Ascending aorta (tissue), 2 donors: ENCODE measurements at regions of chr4 and their contacts with region 1.

Region 1: GRCh38 chr4:156771171-156771837 is 200.3 kb downstream of the PDGFC start:
- DNase-seq: peak in 1 of 2 donors; percentile 73
- H3K4me3 ChIP-seq: peak overlapping the region; percentile 24 to 43
- H3K27ac ChIP-seq: peak overlapping the region; percentile 73 to 80
- H3K4me1 ChIP-seq: peaks cover 6 to 50% of the 10 kb centered on the region in 2 donors
- H3K27me3 ChIP-seq: no peaks in the 10 kb centered on the region
- CTCF ChIP-seq: no peak

Region 2: GRCh38 chr4:156073976-156074375 is 697.3 kb before region 1 on chr4:
- intact Hi-C with region 1: no loop called
- DNase-seq: no peak
- H3K4me3 ChIP-seq: no peak overlapping the region
- H3K27ac ChIP-seq: no peak overlapping the region
- H3K4me1 ChIP-seq: no peaks in the 10 kb centered on the region
- H3K27me3 ChIP-seq: no peaks in the 10 kb centered on the region
- CTCF ChIP-seq: no peak

Region 3: GRCh38 chr4:156132196-156132595 is 639.1 kb before region 1 on chr4:
- intact Hi-C with region 1: no loop called
- DNase-seq: no peak
- H3K4me3 ChIP-seq: no peak overlapping the region
- H3K27ac ChIP-seq: no peak overlapping the region
- H3K4me1 ChIP-seq: no peaks in the 10 kb centered on the region
- H3K27me3 ChIP-seq: no peaks in the 10 kb centered on the region
- CTCF ChIP-seq: no peak

Region 4: GRCh38 chr4:156790866-156791265 is 19.6 kb after region 1 on chr4:
- intact Hi-C with region 1: no loop called
- DNase-seq: no peak
- H3K4me3 ChIP-seq: no peak overlapping the region
- H3K27ac ChIP-seq: no peak overlapping the region
- H3K4me1 ChIP-seq: peaks cover 2 to 17% of the 10 kb centered on the region in 2 donors
- H3K27me3 ChIP-seq: no peaks in the 10 kb centered on the region
- CTCF ChIP-seq: no peak

Region 5: DNA sequence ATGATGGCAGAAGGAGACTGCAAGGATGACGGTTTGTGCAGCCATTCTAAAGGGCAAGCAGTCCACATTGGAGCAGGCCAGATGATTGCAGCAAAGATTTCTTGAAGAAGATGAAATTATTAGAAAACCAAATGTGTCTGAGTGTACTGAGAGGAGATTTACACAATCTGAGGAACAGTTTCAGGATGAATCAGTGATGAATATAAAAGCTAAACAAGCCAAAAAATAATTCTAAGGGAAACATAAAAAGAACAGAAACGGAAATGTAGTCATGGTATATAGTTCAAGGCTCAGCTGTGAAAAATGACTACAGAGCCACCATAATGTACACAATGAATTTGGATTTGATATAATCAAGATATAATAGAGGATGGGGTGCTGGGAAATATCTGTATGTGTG is 31.8 kb after region 1 on chr4:
- intact Hi-C with region 1: no loop called
- DNase-seq: no peak
- H3K4me3 ChIP-seq: no peak overlapping the region
- H3K27ac ChIP-seq: no peak overlapping the region
- H3K4me1 ChIP-seq: peaks cover 0 to 12% of the 10 kb centered on the region in 2 donors
- H3K27me3 ChIP-seq: no peaks in the 10 kb centered on the region
- CTCF ChIP-seq: no peak

Region 6: DNA sequence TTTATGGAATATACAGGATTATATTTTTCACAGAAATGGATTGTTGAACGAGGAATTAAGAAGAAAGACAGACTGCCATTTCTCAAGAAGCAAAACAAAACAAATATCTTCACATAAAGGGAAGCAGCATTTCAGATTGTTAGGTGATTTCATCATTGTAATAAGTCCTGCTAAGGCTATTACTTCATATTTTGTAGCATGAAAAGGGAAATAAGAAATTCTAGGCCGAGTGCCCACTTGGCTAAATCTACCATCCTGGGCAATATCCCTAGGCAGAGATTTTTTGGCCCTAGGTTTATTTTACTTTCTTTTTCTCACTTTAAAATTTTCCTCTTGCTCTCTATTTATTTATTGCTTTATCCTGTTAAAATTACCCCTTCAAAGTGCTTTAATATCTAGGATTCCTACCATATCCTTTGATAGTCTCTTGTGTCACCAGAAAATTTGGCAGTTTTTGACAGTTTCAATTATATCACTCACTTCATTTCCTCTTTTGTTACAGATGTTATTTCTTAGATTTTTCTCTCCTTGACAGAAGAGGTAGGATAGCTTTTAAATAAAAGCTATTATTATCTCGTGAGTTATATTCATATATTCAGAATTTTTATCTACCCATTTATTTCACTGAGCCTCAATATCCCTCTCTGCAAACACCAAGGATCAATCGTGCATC is 58.0 kb after region 1 on chr4:
- intact Hi-C with region 1: loop called (anchors 5 kb)
- DNase-seq: peak in 1 of 2 donors; percentile 72
- H3K4me3 ChIP-seq: peak overlapping the region; percentile 41 to 43
- H3K27ac ChIP-seq: peak overlapping the region; percentile 65 to 73
- H3K4me1 ChIP-seq: peaks cover 0 to 13% of the 10 kb centered on the region in 2 donors
- H3K27me3 ChIP-seq: no peaks in the 10 kb centered on the region
- CTCF ChIP-seq: no peak

Region 7: DNA sequence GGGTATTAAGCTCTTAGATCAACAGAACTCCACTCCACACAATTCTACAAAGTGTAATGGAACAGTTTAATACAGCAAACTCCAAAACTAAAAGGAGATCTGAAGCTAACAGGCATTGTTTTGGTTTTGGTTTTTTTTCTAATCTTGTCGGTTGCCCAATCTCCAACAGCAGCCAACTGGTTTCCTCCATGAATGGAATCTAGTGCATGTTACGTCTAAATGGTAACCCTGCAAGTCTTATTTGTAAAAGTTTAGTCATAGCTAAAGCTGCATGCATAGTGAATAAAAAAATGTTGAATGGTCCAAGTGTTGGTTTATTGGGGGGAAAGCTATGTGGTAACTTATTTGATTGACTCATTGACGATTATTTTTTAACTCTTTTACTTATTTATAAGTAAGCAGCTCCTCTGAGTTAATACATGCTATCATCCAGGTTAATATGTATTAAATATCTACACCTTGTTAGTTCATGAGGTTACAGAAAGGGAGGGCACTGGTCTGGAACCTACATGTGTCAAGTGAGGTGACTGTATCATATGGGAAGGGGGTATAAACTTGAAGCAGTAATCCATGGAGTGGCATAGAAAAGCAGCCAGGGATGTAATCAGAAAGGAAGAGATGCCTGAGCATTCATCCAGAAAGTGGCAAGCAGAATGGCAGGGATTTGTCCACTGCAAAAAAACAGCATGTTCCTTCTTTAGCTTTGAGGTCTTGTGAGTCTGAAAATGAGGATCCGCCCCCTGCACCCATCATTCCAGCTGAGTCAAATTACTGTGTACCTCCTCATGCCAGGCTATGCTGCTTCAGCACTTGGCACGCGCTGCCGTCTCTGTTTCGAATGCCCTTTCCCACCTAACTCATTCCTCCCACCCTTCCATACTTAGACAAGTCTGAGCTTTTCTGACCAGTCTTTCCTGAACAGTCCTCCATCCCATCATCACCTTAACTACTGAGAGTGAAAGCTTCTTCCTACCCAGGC is 118.6 kb after region 1 on chr4:
- intact Hi-C with region 1: loop called (anchors 5 kb)
- DNase-seq: peak; percentile 40 to 65
- H3K4me3 ChIP-seq: no peak overlapping the region
- H3K27ac ChIP-seq: peak overlapping the region; percentile 46 to 56
- H3K4me1 ChIP-seq: peaks cover 3 to 10% of the 10 kb centered on the region in 2 donors
- H3K27me3 ChIP-seq: no peaks in the 10 kb centered on the region
- CTCF ChIP-seq: no peak